ENCODE measurements at regions of chr13 and their contacts with region 1.

Region 1: GRCh38 chr13:26325876-26326275 is 71.9 kb downstream of the CDK8 start:
- DNase-seq: no peak
- H3K4me3 ChIP-seq: no peak overlapping the region
- H3K4me3 Mint-ChIP-seq: no peak overlapping the region
- H3K27ac Mint-ChIP-seq: no peak overlapping the region
- H3K4me1 ChIP-seq: peaks cover 34% of the 10 kb centered on the region
- H3K4me1 Mint-ChIP-seq: peaks cover 21% of the 10 kb centered on the region
- H3K27me3 ChIP-seq: no peaks in the 10 kb centered on the region
- H3K27me3 Mint-ChIP-seq: no peaks in the 10 kb centered on the region
- CTCF ChIP-seq: no peak

Region 2: DNA sequence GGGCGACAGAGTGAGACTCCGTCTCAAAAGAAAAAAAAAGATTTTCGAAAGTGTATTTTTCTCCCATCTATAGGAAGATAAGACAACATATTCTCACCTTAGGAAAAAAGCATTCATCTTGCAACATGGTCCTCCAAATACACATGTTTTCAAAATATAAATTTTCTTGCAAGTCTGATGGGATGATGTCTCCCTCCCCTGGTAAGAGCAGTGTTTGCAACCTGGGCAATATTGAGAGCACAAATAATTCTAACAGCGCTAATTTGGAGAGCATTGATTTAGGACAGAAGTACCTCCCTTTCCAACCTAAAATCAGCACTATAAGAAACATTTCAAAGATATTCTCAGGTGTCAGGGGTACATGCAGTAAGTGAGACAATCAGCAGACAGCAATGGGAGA is 213.0 kb before region 1 on chr13:
- CTCF ChIA-PET with region 1: no interaction called
- POLR2A ChIA-PET with region 1: no interaction called
- intact Hi-C with region 1: no loop called
- DNase-seq: peak in 1 of 2 experiments; percentile 16
- H3K4me3 ChIP-seq: no peak overlapping the region
- H3K4me3 Mint-ChIP-seq: no peak overlapping the region
- H3K27ac Mint-ChIP-seq: no peak overlapping the region
- H3K4me1 ChIP-seq: no peaks in the 10 kb centered on the region
- H3K4me1 Mint-ChIP-seq: no peaks in the 10 kb centered on the region
- H3K27me3 ChIP-seq: no peaks in the 10 kb centered on the region; the same call in 1 of the 2 replicates
- H3K27me3 Mint-ChIP-seq: peaks cover 15% of the 10 kb centered on the region
- CTCF ChIP-seq: peak; percentile 37 to 42

Region 3: DNA sequence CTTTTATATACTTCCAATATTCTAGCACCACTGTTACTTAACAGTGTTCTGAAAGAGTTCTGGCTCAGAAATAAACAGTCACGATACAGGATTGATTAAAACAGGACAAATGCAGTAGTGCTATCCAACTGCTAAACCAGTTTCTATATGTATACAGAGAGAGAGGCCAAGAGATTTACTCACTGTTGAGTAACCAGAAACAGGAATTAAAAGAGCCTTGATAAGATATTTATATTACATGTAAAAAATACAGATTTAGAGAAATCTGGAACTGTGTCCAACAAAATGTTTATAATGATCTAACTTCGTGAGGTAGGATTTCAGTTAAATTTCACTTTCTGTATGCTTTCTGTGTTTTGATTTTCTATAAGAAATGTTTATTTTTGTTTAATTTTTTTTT is 44.7 kb after region 1 on chr13:
- CTCF ChIA-PET with region 1: no interaction called
- POLR2A ChIA-PET with region 1: no interaction called
- intact Hi-C with region 1: loop called (anchors 1 kb)
- DNase-seq: no peak
- H3K4me3 ChIP-seq: no peak overlapping the region
- H3K4me3 Mint-ChIP-seq: no peak overlapping the region
- H3K27ac Mint-ChIP-seq: no peak overlapping the region
- H3K4me1 ChIP-seq: peaks cover 6% of the 10 kb centered on the region
- H3K4me1 Mint-ChIP-seq: peaks cover 12% of the 10 kb centered on the region
- H3K27me3 ChIP-seq: no peaks in the 10 kb centered on the region
- H3K27me3 Mint-ChIP-seq: no peaks in the 10 kb centered on the region
- CTCF ChIP-seq: no peak

Region 4: DNA sequence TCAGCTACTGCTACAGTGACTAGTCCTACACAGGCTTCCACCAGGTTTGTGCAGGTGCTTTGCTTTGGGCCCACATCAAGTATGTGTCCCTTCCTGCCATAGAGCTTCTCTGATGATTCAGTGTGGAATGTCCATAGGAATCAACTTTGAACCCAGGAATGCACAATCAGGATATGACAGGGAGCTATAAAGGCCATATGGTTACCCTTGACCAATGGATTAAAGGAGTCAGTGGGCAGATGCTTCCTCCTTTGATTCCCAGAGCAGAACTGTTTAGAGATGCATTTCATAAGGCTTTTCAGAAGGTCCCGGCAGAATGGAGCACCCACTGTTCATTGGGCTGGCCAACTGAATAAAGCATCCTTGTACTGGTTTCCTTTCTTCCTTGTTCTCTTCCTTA is 86.4 kb after region 1 on chr13:
- CTCF ChIA-PET with region 1: no interaction called
- POLR2A ChIA-PET with region 1: no interaction called
- intact Hi-C with region 1: loop called (anchors 10 kb)
- DNase-seq: peak in 1 of 2 experiments; percentile 20
- H3K4me3 ChIP-seq: no peak overlapping the region
- H3K4me3 Mint-ChIP-seq: no peak overlapping the region
- H3K27ac Mint-ChIP-seq: no peak overlapping the region
- H3K4me1 ChIP-seq: peaks cover 18% of the 10 kb centered on the region
- H3K4me1 Mint-ChIP-seq: peaks cover 15% of the 10 kb centered on the region
- H3K27me3 ChIP-seq: no peaks in the 10 kb centered on the region
- H3K27me3 Mint-ChIP-seq: no peaks in the 10 kb centered on the region
- CTCF ChIP-seq: no peak